Dendritic cell treated with granulocyte-macrophage colony-stimulating factor and Interleukin-4, amounts not matched to agents 40 ng/mL and 50 ng/mL, for 4 days (primary cell): ENCODE measurements at regions of chr16 and their contacts with region 1.

Region 1: GRCh38 chr16:22272870-22273595 is 24.2 kb upstream of the POLR3E start:
- H3K4me3 Mint-ChIP-seq: no peak overlapping the region
- H3K27ac Mint-ChIP-seq: no peak overlapping the region
- H3K4me1 Mint-ChIP-seq: no peaks in the 10 kb centered on the region
- H3K27me3 Mint-ChIP-seq: no peaks in the 10 kb centered on the region

Region 2: GRCh38 chr16:21971856-21972255 is 301.2 kb before region 1 on chr16:
- intact Hi-C with region 1: loop called (anchors 10 kb)
- H3K4me3 Mint-ChIP-seq: no peak overlapping the region
- H3K27ac Mint-ChIP-seq: no peak overlapping the region
- H3K4me1 Mint-ChIP-seq: no peaks in the 10 kb centered on the region
- H3K27me3 Mint-ChIP-seq: no peaks in the 10 kb centered on the region

Region 3: DNA sequence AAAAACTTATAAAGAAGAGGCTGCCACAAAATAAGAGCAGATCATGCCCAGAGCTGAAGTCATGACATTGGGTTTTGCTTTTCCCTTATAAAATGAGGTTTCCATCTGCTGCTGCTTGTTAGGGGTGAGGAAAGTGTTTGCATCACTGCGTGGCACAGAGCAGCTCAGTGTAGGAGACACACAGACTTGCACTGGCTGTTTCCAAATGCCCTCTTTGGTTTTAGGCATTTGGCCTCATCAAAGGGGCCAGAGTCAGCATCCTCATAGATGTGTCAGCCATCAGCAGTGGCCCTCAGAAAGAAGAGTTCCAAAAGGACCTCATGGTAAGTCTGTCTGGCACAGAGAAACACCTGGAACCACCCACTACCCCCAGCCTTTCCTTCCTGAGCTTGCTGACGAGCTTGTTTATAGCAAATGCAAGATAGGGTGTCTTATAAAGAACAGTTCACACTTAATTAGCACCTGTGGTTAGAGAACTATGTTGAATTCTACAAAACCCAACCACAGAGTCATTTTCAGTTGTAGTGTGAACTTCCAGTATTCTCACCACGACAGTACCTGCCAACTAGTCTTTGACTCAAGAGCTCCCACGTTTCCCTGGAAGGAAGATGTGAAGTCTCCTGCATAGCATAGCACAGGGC is 163.7 kb before region 1 on chr16:
- intact Hi-C with region 1: no loop called
- H3K4me3 Mint-ChIP-seq: no peak overlapping the region
- H3K27ac Mint-ChIP-seq: no peak overlapping the region
- H3K4me1 Mint-ChIP-seq: no peaks in the 10 kb centered on the region
- H3K27me3 Mint-ChIP-seq: peaks cover 6% of the 10 kb centered on the region

Region 4: DNA sequence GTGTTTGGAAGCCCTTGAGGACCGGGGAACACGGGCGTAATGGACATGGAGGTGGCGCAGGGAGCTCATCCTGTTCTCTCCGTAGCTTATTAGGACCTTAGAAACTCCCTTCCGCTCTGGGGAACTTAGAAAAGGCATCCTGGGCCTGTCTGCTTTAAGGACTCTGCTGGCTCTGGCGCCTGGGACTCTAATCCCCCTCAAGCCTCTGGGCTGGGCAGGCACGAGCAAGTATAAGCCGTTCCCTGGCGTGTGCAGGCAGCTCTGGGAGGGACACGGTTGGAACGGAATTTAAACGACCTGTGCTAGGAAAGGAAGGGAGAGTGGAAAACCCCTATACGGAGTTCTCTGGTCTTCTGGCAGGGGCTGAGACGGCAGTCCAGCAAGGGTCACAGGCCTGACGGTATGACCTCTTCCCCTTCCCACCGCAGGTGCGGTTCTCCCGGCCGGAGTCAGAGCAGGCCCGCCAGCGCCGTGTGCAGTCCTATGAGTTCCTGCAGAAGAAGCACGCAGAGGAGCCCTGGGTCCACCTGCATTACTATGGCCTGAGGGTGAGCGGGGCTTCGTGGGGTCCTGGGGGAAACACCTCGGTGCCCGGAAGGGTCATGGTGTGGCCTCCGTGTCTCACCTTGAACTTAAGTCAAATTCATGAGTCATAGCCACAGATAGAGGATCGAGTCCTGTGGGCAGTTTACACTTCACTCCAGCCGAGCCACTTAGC is 41.8 kb after region 1 on chr16:
- intact Hi-C with region 1: no loop called
- H3K4me3 Mint-ChIP-seq: no peak overlapping the region
- H3K27ac Mint-ChIP-seq: peak overlapping the region; percentile 30
- H3K4me1 Mint-ChIP-seq: no peaks in the 10 kb centered on the region
- H3K27me3 Mint-ChIP-seq: no peaks in the 10 kb centered on the region